ENCODE measurements at regions of chr9 and their contacts with region 1.

Region 1: DNA sequence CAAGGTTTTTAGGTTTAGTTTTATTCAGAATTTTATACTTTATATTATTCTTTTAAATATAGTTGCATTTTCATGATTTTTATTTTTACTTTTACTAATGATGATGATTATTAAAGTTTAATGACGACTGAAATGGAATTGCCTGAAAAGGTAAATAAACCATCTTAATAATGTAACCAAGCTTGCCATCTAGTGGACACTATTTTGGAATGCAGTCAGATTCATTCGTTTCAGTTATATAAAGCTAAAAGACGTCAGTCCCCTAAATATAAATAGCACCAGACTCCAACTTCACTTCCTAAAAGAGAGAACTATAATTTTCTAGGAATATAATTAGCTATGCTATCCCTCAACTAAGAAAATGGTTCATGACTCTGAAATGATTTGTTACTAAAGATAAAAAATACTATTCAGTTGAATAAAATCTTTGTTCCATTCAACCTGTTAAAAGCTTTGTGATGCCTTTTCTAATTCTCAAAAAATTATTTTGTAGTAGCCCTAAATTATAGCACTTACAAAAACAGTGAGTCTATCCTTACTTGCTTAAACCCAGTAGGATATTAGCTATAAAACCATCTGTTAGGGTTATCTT is 19.9 kb downstream of the ABITRAM start:
- DNase-seq: peak in 1 of 2 donors; percentile 23
- ATAC-seq: peak in 7 of 8 donors; percentile 55 to 88 (median 82)
- H3K4me3 ChIP-seq: no peak overlapping the region
- H3K27ac ChIP-seq: peak overlapping the region in 7 of 10 donors; percentile 19 to 77 (median 69)
- H3K4me1 ChIP-seq: peaks cover 0 to 36% (median 9%) of the 10 kb centered on the region in 9 donors
- H3K27me3 ChIP-seq: no peaks in the 10 kb centered on the region
- CTCF ChIP-seq: peak; percentile 37 to 84 (median 74)

Region 2: DNA sequence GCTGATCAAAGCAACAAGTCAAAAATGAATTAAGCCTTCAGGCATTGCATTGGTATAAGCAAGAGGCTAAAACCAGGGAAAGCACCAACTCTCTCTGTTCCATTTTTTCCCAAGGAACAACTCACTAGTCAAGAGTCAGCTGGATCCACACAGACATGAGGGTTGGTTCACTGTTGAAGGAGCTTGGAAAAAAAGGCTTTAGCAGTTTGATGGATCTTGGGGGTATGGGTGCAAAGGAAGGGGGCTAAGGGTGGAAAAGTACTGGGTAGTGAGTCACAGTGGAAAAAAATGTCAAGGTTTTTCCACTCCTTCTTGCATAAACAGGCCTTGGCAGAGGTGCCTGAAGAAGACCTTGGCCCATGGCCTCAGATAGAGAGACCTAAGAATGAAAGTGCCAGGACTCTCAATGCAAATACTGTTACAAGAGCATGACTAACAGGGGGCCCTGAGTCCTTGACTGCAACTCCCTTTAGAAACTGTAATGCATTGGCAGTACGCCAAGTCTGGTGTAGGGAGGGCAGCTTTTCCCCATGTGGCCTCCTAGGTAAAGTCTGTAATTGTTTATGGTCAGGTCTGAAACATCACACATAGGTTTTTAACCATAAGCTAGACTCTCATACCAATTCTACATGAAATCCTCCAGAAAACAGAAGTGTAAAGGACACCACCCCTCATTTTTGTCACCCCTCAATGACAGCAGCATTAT is 68.3 kb before region 1 on chr9:
- intact Hi-C with region 1: loop called in 1 of 10 experiments (anchors 10 kb)
- DNase-seq: peak in 1 of 2 donors; percentile 20
- ATAC-seq: peak in 6 of 8 donors; percentile 28 to 69 (median 58)
- H3K4me3 ChIP-seq: no peak overlapping the region
- H3K27ac ChIP-seq: no peak overlapping the region
- H3K4me1 ChIP-seq: peaks cover 0 to 19% (median 4%) of the 10 kb centered on the region in 9 donors
- H3K27me3 ChIP-seq: no peaks in the 10 kb centered on the region
- CTCF ChIP-seq: no peak

Region 3: DNA sequence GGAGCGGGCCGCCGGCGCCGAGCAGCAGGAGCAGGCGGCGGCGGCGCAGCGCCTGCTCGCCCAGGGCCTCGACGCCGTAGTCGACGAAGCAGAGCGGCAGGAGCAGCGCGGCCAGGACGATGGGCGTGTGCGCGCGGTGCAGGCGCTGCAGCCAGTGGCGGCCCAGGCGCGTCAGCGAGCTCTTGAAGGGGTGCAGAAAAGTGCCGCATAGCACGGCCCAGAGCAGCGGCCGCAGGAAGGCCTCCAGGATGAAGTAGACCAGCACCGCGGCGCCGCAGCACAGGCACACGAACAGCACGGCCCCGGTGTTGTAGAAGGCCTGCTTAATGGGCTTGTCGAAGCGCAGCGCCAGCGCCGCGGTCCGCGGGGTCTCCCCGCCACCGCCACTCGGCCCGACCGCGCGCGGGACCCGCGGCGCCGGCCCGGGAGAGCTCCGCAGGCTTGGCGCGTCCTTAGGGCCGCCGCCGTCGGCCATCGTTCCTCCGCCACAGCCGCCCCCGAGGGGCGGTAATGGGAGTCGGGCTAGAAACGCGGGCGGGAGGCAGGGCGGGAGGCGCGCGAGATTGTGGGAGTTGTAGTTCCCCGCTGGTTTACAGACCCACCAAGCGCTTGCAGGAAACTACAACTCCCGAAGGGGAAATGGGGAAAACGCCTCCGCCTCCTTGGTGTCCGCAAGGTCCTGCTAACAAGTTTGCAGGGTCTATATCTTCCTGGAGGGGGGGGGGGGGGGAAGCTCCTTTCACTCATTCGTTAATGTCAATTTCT is 165.5 kb after region 1 on chr9 and contains the start of gene TMEM245:
- intact Hi-C with region 1: no loop called
- DNase-seq: peak; percentile 94 to 99
- ATAC-seq: peak; percentile 95 to 99 (median 98)
- H3K4me3 ChIP-seq: peak within 1 kb of the TSS; percentile 68 to 99 (median 92)
- H3K27ac ChIP-seq: peak within 1 kb of the TSS; percentile 44 to 99 (median 94)
- H3K4me1 ChIP-seq: peaks cover under 1 to 51% (median 38%) of the 10 kb centered on the region in 9 donors
- H3K27me3 ChIP-seq: no peaks in the 10 kb centered on the region
- CTCF ChIP-seq: peak in 3 of 9 donors; percentile 3 to 23 (median 22)
- total RNA-seq, gene TMEM245: 84.2 to 152 (median 99.9) TPM